CD8-positive, alpha-beta T cell (primary cell): ENCODE measurements at regions of chr11 and their contacts with region 1.

Region 1: GRCh38 chr11:68459886-68460740 is 439 bp upstream of the PPP6R3 start:
- DNase-seq: peak; percentile 90 to 98 (median 94)
- ATAC-seq: peak; percentile 91
- H3K4me3 ChIP-seq: peak overlapping the region; percentile 92 to 95
- H3K4me3 Mint-ChIP-seq: peak overlapping the region; percentile 97
- H3K27ac ChIP-seq: peak overlapping the region; percentile 95 to 98
- H3K27ac Mint-ChIP-seq: peak overlapping the region; percentile 98
- H3K4me1 ChIP-seq: peaks cover 35% of the 10 kb centered on the region
- H3K4me1 Mint-ChIP-seq: peaks cover 38% of the 10 kb centered on the region
- H3K27me3 ChIP-seq: no peaks in the 10 kb centered on the region
- H3K27me3 Mint-ChIP-seq: no peaks in the 10 kb centered on the region
- CTCF ChIP-seq: no peak

Region 2: DNA sequence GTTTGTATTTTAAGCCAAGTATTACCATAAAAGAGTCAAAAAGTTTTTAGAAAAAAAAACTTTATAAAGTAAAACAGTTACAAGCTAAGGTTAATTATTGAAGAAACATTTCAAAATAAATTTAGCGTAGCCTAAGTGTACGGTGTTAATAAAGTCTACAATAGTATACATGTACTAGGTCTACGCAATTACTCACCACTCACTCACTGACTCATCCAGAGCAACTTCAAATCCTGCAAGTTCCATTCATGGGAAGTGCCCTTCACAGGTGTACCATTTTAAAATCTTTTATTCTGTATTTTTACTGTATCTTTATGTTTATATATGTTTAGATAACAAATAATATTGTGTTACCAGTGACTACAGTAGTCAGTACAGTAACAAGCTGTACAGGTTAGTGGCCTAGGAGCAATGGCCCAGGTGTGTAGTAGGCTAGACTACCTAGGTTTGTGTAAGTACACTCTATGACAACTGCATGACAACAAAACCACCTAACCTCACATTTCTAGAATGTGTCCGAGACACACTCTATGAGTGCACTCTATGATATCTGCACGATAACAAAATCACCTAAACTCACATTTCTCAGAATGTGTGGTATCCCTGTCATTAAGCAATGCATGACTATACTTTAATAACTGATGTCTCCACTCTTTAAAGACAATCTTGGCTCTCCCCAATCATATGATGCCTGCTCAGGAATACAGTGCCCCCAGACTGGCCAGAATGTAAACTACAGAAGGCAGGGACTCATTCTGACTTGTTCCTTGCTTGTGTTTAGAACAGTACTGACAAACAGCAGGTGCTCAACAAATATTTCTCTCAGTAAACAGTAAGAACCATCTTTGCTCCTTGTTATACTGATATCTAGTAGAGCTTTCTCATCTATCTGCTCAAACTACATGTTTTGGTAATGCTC is 268.2 kb before region 1 on chr11:
- CTCF ChIA-PET with region 1: no interaction called
- POLR2A ChIA-PET with region 1: no interaction called
- intact Hi-C with region 1: no loop called
- DNase-seq: no peak
- ATAC-seq: no peak
- H3K4me3 ChIP-seq: no peak overlapping the region
- H3K4me3 Mint-ChIP-seq: no peak overlapping the region
- H3K27ac ChIP-seq: no peak overlapping the region
- H3K27ac Mint-ChIP-seq: peak overlapping the region; percentile 16
- H3K4me1 ChIP-seq: peaks cover 12% of the 10 kb centered on the region
- H3K4me1 Mint-ChIP-seq: peaks cover 59% of the 10 kb centered on the region
- H3K27me3 ChIP-seq: no peaks in the 10 kb centered on the region
- H3K27me3 Mint-ChIP-seq: no peaks in the 10 kb centered on the region
- CTCF ChIP-seq: no peak

Region 3: DNA sequence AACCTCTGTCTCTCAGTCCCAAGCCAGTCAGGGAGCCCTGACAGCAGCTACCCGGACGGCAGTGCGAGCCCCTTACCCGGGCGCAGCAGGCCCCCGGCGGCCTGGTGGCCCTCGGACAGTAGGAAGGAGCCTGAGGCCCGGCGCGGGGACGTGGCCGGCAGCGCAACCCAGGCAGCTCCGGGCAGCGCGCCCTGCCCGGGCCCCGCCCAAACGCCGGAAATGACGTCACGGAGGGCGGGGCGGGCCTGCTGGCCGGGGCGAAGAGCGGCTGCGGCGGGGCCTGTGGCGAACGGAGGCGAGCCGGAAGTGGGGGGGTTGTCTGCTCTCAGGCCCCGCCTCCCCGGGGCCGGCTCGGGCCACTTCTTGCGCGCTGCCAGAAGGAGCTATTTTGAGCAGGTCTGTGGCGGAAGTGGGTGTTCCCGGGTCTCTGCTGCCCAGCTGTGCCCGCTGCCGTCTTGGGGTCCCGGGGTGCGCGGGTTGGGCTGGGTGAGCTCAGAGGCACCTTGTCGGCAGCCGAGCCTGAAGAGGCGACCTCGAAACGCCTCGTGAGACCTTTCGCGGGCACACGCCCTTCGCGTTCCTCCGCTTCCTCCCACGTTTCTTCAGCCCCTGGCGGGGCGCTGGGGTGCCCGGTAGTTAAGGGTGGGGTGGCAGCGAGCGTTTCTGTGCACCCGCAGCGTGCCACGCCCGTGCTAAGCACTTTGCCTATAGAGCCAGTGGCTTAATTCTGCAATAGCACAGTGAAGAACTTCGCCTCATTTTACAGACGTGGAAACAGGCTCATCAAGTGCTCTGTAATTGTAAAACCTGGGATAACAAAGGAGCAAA is 188.1 kb before region 1 on chr11 and contains the start of gene C11orf24:
- CTCF ChIA-PET with region 1: no interaction called
- POLR2A ChIA-PET with region 1: no interaction called
- intact Hi-C with region 1: loop called in 1 of 2 experiments (anchors 5 kb)
- DNase-seq: peak; percentile 81 to 97 (median 93)
- ATAC-seq: peak; percentile 86
- H3K4me3 ChIP-seq: peak within 1 kb of the TSS; percentile 71 to 95
- H3K4me3 Mint-ChIP-seq: peak within 1 kb of the TSS; percentile 91
- H3K27ac ChIP-seq: peak within 1 kb of the TSS; percentile 93 to 97
- H3K27ac Mint-ChIP-seq: peak within 1 kb of the TSS; percentile 95
- H3K4me1 ChIP-seq: peaks cover 26% of the 10 kb centered on the region
- H3K4me1 Mint-ChIP-seq: peaks cover 32% of the 10 kb centered on the region
- H3K27me3 ChIP-seq: no peaks in the 10 kb centered on the region
- H3K27me3 Mint-ChIP-seq: no peaks in the 10 kb centered on the region
- CTCF ChIP-seq: no peak
- total RNA-seq, gene C11orf24: 6.5 to 8.2 TPM

Region 4: DNA sequence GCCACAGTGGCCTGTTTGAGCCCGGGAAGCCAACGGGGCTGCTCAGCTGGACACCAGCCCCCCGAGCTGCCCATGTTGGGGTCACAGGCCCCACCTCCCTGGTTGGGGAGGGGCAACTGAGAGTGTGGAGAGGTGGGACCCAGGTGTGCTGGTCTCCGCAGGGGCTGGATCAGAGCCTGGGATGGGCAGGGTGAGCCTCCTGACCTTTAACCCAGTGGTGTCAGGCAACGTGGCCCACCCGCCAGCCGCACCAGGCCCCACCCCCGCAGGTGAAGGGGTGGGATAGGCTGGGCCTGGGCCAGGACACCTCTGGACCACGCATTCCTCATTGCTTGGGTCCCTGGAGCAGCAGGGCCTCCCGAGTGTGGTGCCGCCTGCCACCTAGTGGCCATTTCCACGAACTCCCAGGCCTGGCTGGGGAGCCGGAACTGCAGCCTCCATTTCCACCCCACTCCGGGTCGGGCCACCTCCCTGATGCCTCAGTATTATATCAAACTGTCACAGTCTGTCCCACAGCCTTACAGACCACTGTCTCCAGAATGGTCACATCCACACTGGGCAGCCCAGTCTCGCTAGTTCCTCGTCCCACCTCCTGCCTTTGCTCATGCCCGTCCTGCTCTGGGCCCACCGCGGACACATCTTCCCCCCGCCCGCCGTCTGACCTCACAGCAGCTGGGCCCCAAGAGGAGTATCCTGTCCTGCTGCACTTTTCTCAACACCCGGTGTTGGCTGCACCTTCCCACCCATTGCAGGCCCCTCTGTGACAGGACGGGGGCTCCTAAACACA is 12.9 kb before region 1 on chr11:
- CTCF ChIA-PET with region 1: interaction called, 3 read pairs
- POLR2A ChIA-PET with region 1: no interaction called
- intact Hi-C with region 1: loop called in 1 of 2 experiments (anchors 1 kb)
- DNase-seq: peak; percentile 57 to 85 (median 76)
- ATAC-seq: peak; percentile 99
- H3K4me3 ChIP-seq: no peak overlapping the region
- H3K4me3 Mint-ChIP-seq: peak overlapping the region; percentile 26
- H3K27ac ChIP-seq: no peak overlapping the region
- H3K27ac Mint-ChIP-seq: no peak overlapping the region
- H3K4me1 ChIP-seq: peaks cover 7% of the 10 kb centered on the region
- H3K4me1 Mint-ChIP-seq: peaks cover 4% of the 10 kb centered on the region
- H3K27me3 ChIP-seq: no peaks in the 10 kb centered on the region
- H3K27me3 Mint-ChIP-seq: no peaks in the 10 kb centered on the region
- CTCF ChIP-seq: peak; percentile 84

Region 5: DNA sequence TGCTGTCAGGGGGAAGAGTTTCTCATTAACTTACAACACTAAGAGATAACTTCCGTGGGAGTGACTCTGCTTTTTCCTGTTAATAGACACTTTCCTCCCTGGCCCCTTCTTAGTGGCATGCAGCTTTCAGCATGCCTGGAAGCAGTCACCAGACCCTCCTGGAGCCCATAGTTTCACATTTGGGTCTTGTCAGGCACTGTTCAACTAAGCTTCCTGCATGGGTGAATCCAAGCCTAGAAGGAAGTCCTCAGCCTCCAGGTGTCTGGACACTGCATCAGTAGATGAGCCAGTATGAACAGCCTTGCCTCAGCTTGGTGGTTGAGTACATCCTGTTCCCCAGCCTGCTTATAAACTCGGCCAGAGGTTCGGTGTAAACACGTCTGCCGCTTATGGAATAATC is 68.5 kb after region 1 on chr11:
- CTCF ChIA-PET with region 1: no interaction called
- POLR2A ChIA-PET with region 1: interaction called, 5 read pairs
- intact Hi-C with region 1: loop called (anchors 5 kb)
- DNase-seq: peak in 7 of 9 experiments; percentile 7 to 55 (median 22)
- ATAC-seq: peak; percentile 62
- H3K4me3 ChIP-seq: no peak overlapping the region
- H3K4me3 Mint-ChIP-seq: peak overlapping the region; percentile 20
- H3K27ac ChIP-seq: no peak overlapping the region
- H3K27ac Mint-ChIP-seq: peak overlapping the region; percentile 80
- H3K4me1 ChIP-seq: peaks cover 49% of the 10 kb centered on the region
- H3K4me1 Mint-ChIP-seq: peaks cover 92% of the 10 kb centered on the region
- H3K27me3 ChIP-seq: no peaks in the 10 kb centered on the region
- H3K27me3 Mint-ChIP-seq: no peaks in the 10 kb centered on the region
- CTCF ChIP-seq: no peak